T-cell (primary cell): ENCODE measurements at regions of chr4 and their contacts with region 1.

Region 1: DNA sequence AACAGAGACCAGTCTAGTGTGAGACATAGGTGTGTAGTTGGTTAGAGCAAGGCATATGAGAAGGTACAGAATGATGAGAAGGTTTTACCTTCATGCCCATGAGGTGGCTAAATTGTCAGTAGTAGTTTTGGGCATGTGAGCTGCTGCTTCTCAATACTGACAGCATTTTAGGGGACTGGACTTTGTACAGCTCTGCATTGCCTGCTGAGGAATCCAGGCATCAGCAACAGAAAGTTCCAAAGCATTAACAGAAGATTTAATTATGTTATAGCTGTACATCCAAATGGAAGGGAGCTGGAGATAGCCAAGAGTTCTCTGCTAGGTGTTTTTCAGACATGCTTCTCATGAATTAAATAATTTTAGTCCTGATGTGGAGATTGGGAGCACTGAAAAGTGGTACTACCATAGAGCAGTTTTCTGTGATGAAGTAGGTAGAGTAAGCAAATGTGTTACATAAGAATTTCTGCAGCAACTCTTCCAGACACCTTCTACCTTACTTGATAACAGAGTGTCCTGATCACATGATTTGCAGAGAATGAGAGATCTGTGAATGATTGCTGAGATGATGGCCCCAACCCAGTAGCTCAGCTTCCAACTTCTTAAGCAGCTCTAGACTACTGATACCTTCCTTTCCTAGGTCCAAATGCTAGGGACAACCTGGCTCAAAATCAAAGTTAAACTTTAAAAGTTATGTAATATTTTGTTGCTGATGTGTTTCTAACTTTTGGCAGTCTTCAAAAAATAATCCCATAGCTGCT is 30.4 kb downstream of the FNIP2 start:
- DNase-seq: no peak
- ATAC-seq: peak in 1 of 4 experiments; percentile 19
- H3K4me3 ChIP-seq: no peak overlapping the region
- H3K4me3 Mint-ChIP-seq: no peak overlapping the region
- H3K27ac ChIP-seq: no peak overlapping the region
- H3K27ac Mint-ChIP-seq: no peak overlapping the region
- H3K4me1 ChIP-seq: no peaks in the 10 kb centered on the region
- H3K4me1 Mint-ChIP-seq: peaks cover 11 to 21% (median 13%) of the 10 kb centered on the region in 3 donors
- H3K27me3 ChIP-seq: no peaks in the 10 kb centered on the region
- H3K27me3 Mint-ChIP-seq: no peaks in the 10 kb centered on the region

Region 2: DNA sequence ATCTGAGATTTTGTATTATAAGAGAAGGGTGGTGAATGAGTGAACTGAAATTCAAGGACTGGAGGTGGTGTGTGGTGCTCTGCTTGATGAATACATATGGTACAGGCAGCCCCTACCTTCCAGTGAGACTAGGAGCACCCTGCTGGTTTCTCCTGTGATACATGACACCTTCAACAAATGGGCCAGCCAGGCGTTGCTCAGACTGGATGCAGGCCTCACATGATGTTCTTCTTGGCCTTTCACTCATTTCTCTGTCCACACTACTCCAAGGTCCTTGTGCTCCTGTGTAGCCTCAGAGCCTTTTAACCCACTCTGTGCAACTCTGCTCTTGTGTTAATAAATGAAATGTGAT is 36.8 kb after region 1 on chr4:
- CTCF ChIA-PET with region 1: no interaction called
- POLR2A ChIA-PET with region 1: interaction called in 1 of 2 experiments, 11 read pairs
- DNase-seq: no peak
- ATAC-seq: no peak
- H3K4me3 ChIP-seq: no peak overlapping the region
- H3K4me3 Mint-ChIP-seq: no peak overlapping the region
- H3K27ac ChIP-seq: no peak overlapping the region
- H3K27ac Mint-ChIP-seq: no peak overlapping the region
- H3K4me1 ChIP-seq: peaks cover 0 to 5% of the 10 kb centered on the region in 2 experiments
- H3K4me1 Mint-ChIP-seq: no peaks in the 10 kb centered on the region
- H3K27me3 ChIP-seq: no peaks in the 10 kb centered on the region
- H3K27me3 Mint-ChIP-seq: no peaks in the 10 kb centered on the region